Activated naive CD4-positive, alpha-beta T cell treated with anti-CD3 and anti-CD28 coated beads for 36 hours (primary cell): ENCODE measurements at regions of chr5 and their contacts with region 1.

Region 1: DNA sequence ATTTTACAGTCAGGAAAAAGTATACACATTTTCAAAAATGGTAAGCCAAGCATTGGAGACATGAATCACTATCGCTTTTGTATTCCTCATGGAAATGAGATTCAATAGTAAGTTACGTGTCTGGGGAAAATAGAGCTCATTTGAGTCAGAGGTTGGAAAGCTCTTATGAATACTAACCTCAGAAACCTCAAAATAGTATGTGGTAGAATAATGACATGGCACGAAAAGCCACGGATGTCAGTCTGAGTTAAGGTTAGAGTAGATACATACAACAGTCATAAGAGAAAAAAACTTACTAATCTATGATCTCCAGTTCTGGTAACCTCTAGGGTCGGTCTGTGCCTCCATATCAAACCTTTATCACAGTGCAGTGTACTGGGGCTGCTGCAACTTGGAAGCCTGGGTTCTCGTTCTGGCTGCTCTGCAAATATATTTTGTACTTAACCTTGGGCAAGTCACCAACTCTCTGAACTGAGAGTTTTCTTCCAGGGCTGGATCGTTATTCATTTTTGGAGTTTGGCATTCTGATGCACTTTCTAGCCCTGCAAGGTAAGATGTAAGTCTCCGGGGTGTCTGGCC is 31.8 kb downstream of the MAP1B start:
- DNase-seq: peak; percentile 33
- H3K4me3 Mint-ChIP-seq: no peak overlapping the region
- H3K27ac Mint-ChIP-seq: no peak overlapping the region
- H3K4me1 Mint-ChIP-seq: peaks cover 21% of the 10 kb centered on the region
- H3K27me3 Mint-ChIP-seq: peaks cover 35% of the 10 kb centered on the region

Region 2: GRCh38 chr5:72093217-72093616 is 45.8 kb before region 1 on chr5:
- CTCF ChIA-PET with region 1: no interaction called
- intact Hi-C with region 1: loop called (anchors 1 kb)
- DNase-seq: no peak
- H3K4me3 Mint-ChIP-seq: no peak overlapping the region
- H3K27ac Mint-ChIP-seq: no peak overlapping the region
- H3K4me1 Mint-ChIP-seq: peaks cover 3% of the 10 kb centered on the region
- H3K27me3 Mint-ChIP-seq: peaks cover 21% of the 10 kb centered on the region

Region 3: GRCh38 chr5:72156946-72157624 is 18.1 kb after region 1 on chr5:
- CTCF ChIA-PET with region 1: no interaction called
- intact Hi-C with region 1: no loop called
- DNase-seq: no peak
- H3K4me3 Mint-ChIP-seq: no peak overlapping the region
- H3K27ac Mint-ChIP-seq: no peak overlapping the region
- H3K4me1 Mint-ChIP-seq: no peaks in the 10 kb centered on the region
- H3K27me3 Mint-ChIP-seq: peaks cover 11% of the 10 kb centered on the region

Region 4: GRCh38 chr5:72167804-72168203 is 28.8 kb after region 1 on chr5:
- CTCF ChIA-PET with region 1: no interaction called
- intact Hi-C with region 1: no loop called
- DNase-seq: no peak
- H3K4me3 Mint-ChIP-seq: no peak overlapping the region
- H3K27ac Mint-ChIP-seq: no peak overlapping the region
- H3K4me1 Mint-ChIP-seq: peaks cover 6% of the 10 kb centered on the region
- H3K27me3 Mint-ChIP-seq: peaks cover 21% of the 10 kb centered on the region

Region 5: GRCh38 chr5:72234265-72234700 is 95.3 kb after region 1 on chr5:
- CTCF ChIA-PET with region 1: no interaction called
- intact Hi-C with region 1: loop called (anchors 1 kb)
- DNase-seq: peak; percentile 47
- H3K4me3 Mint-ChIP-seq: no peak overlapping the region
- H3K27ac Mint-ChIP-seq: peak overlapping the region; percentile 30
- H3K4me1 Mint-ChIP-seq: peaks cover 46% of the 10 kb centered on the region
- H3K27me3 Mint-ChIP-seq: no peaks in the 10 kb centered on the region

Region 6: GRCh38 chr5:72268753-72269410 is 129.8 kb after region 1 on chr5:
- CTCF ChIA-PET with region 1: no interaction called
- intact Hi-C with region 1: loop called (anchors 2 kb)
- DNase-seq: peak; percentile 58
- H3K4me3 Mint-ChIP-seq: no peak overlapping the region
- H3K27ac Mint-ChIP-seq: no peak overlapping the region
- H3K4me1 Mint-ChIP-seq: peaks cover 4% of the 10 kb centered on the region
- H3K27me3 Mint-ChIP-seq: no peaks in the 10 kb centered on the region

Region 7: GRCh38 chr5:72319976-72320752 is 181.1 kb after region 1 on chr5 and contains the starts of genes MRPS27 and PTCD2:
- CTCF ChIA-PET with region 1: no interaction called
- intact Hi-C with region 1: loop called (anchors 1 kb)
- DNase-seq: peak; percentile 97
- H3K4me3 Mint-ChIP-seq: peak within 1 kb of the TSS; percentile 80
- H3K27ac Mint-ChIP-seq: peak within 1 kb of the TSS; percentile 91
- H3K4me1 Mint-ChIP-seq: peaks cover 45% of the 10 kb centered on the region
- H3K27me3 Mint-ChIP-seq: no peaks in the 10 kb centered on the region
- total RNA-seq, gene MRPS27: 86.0 to 95.8 TPM
- total RNA-seq, gene PTCD2: 10.1 to 11.6 TPM

Region 8: DNA sequence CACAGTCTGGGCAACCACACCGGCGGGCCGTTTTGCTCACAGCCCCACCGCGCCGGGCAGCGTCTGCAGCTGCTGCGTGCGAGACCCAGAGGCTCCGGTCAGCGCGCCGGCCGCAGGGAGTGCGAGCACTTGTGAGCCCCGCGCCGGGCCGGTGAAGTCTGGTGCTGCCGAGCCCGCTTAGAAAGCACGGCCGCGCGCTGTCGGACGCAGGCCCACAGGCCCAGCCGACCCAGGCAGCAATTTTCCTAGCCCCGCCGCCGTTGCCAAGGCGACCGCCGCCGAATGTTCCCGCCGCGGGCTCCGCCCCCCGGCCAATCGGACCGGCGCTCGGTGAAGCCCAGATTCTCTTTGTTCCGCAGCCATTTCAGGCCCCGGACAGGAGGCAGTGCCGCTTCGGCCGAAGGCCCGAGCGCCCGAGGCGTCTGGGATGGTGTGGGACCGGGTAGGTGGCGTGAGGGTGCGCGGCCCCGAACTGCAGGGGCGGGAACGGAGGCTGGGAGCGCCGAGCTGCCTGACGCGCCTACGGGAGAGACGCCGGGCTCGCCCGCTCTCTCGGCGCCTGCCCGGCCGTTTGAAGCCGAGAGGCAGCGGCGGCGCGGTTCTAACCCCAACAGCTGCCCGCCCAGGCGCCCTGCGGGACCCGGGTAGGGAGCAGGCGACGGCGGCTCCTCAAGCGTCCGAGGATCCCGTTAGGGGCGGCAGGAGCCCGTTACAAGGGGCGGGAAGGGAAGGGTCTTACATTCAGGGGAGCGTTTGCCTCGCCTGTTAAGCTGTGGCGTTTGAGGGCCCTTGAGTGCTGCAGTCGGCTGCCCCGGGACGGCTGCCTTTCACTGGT is 677.5 kb after region 1 on chr5 and contains the start of gene TNPO1:
- CTCF ChIA-PET with region 1: no interaction called
- intact Hi-C with region 1: loop called (anchors 5 kb)
- DNase-seq: peak; percentile 82
- H3K4me3 Mint-ChIP-seq: peak within 1 kb of the TSS; percentile 81
- H3K27ac Mint-ChIP-seq: peak within 1 kb of the TSS; percentile 70
- H3K4me1 Mint-ChIP-seq: peaks cover 14% of the 10 kb centered on the region
- H3K27me3 Mint-ChIP-seq: peaks cover 9% of the 10 kb centered on the region
- total RNA-seq, gene TNPO1: 105 to 107 TPM